CD4-positive, alpha-beta T cell (primary cell): ENCODE measurements at regions of chr6 and their contacts with region 1.

Region 1: DNA sequence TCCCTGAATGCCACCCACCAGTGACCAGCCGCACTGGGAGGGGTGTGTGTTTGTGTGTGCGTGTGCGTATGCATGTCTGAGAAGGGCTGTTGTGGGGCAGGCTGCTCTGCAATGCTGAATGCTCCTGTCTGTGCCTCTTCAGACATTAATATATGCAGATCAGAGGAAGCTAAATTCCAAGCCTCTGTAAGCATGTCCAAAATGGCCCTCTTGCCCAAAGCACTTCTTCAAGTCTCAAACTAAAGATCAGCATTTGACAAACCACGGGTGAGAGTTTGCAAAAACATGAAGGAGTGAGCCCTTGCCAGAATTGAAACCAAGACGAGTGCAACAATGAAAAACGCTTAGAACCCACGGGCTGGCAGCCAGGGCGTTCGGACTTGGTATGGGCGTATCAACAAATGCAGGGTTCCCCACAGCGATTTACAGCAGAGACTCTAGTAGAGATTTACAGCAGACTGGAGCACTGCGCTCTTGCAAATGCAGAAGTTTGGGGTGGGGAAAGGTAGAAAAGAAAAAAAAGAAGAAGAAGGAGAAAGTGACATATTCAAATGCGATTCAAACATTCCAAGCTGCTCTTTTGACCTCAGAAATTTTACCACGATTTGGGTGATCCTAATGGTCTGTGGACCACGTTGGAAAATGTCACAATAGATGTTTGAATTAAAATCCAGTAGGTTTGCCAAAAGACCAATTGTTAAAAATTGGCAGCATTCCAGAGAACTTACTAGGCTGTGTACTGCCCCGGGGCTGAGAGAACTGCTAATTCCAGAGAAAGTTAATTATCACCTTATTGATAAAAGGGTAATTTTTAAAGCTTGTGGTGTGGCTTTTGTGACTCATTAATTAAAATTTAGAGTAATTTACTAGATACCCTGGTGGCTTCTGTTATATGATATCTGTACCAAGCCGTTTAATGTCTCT is 3.5 kb downstream of the SCML4 start:
- DNase-seq: peak; percentile 39 to 69 (median 49)
- ATAC-seq: no peak
- H3K4me3 ChIP-seq: peak overlapping the region; percentile 74
- H3K4me3 Mint-ChIP-seq: peak overlapping the region; percentile 96
- H3K27ac ChIP-seq: peak overlapping the region; percentile 87 to 88
- H3K27ac Mint-ChIP-seq: peak overlapping the region; percentile 96
- H3K4me1 ChIP-seq: peaks cover 64% of the 10 kb centered on the region
- H3K4me1 Mint-ChIP-seq: peaks cover 87% of the 10 kb centered on the region
- H3K27me3 ChIP-seq: no peaks in the 10 kb centered on the region
- H3K27me3 Mint-ChIP-seq: no peaks in the 10 kb centered on the region
- CTCF ChIP-seq: no peak

Region 2: GRCh38 chr6:107634324-107635056 is 186.1 kb before region 1 on chr6:
- CTCF ChIA-PET with region 1: no interaction called
- POLR2A ChIA-PET with region 1: no interaction called
- intact Hi-C with region 1: no loop called
- DNase-seq: peak in 1 of 14 experiments; percentile 30
- ATAC-seq: no peak
- H3K4me3 ChIP-seq: no peak overlapping the region
- H3K4me3 Mint-ChIP-seq: peak overlapping the region; percentile 38
- H3K27ac ChIP-seq: no peak overlapping the region
- H3K27ac Mint-ChIP-seq: no peak overlapping the region
- H3K4me1 ChIP-seq: peaks cover 12% of the 10 kb centered on the region
- H3K4me1 Mint-ChIP-seq: no peaks in the 10 kb centered on the region
- H3K27me3 ChIP-seq: peaks cover 24 to 43% of the 10 kb centered on the region in 2 experiments
- H3K27me3 Mint-ChIP-seq: peaks cover 72% of the 10 kb centered on the region
- CTCF ChIP-seq: no peak

Region 3: DNA sequence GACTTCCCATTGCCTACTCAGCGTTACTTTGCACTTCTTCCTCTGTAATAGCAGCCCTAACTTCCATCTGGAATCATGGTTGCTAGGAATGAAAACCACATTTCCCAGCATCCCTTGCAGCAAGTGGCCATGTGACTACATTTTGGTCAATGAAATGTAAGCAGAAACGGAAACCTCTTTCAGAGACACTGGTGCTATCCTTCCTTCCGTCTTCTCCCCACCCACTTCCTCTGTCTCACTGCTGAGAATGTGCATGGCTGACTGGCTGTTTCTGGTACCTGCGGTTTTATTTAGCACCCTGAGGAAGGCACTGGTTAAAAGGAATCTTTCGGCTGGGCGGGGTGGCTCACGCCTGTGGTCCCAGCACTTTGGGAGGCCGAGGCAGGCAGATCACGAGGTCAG is 103.9 kb before region 1 on chr6:
- CTCF ChIA-PET with region 1: no interaction called
- POLR2A ChIA-PET with region 1: interaction called, 21 read pairs
- intact Hi-C with region 1: no loop called
- DNase-seq: peak; percentile 49 to 95 (median 66)
- ATAC-seq: peak; percentile 91
- H3K4me3 ChIP-seq: no peak overlapping the region
- H3K4me3 Mint-ChIP-seq: peak overlapping the region; percentile 75
- H3K27ac ChIP-seq: peak overlapping the region in 1 of 2 donors; percentile 63
- H3K27ac Mint-ChIP-seq: peak overlapping the region; percentile 91
- H3K4me1 ChIP-seq: peaks cover 76% of the 10 kb centered on the region
- H3K4me1 Mint-ChIP-seq: peaks cover 77% of the 10 kb centered on the region
- H3K27me3 ChIP-seq: no peaks in the 10 kb centered on the region
- H3K27me3 Mint-ChIP-seq: no peaks in the 10 kb centered on the region
- CTCF ChIP-seq: no peak

Region 4: GRCh38 chr6:107740496-107741190 is 80.0 kb before region 1 on chr6:
- CTCF ChIA-PET with region 1: interaction called, 5 read pairs
- POLR2A ChIA-PET with region 1: interaction called, 259 read pairs
- intact Hi-C with region 1: loop called in 1 of 2 experiments (anchors 1 kb)
- DNase-seq: peak in 4 of 14 experiments; percentile 49 to 56 (median 54)
- ATAC-seq: peak; percentile 14
- H3K4me3 ChIP-seq: peak overlapping the region; percentile 46
- H3K4me3 Mint-ChIP-seq: peak overlapping the region; percentile 76
- H3K27ac ChIP-seq: peak overlapping the region; percentile 69 to 86
- H3K27ac Mint-ChIP-seq: peak overlapping the region; percentile 93
- H3K4me1 ChIP-seq: peaks cover 59% of the 10 kb centered on the region
- H3K4me1 Mint-ChIP-seq: peaks cover 87% of the 10 kb centered on the region
- H3K27me3 ChIP-seq: no peaks in the 10 kb centered on the region
- H3K27me3 Mint-ChIP-seq: no peaks in the 10 kb centered on the region
- CTCF ChIP-seq: no peak

Region 5: DNA sequence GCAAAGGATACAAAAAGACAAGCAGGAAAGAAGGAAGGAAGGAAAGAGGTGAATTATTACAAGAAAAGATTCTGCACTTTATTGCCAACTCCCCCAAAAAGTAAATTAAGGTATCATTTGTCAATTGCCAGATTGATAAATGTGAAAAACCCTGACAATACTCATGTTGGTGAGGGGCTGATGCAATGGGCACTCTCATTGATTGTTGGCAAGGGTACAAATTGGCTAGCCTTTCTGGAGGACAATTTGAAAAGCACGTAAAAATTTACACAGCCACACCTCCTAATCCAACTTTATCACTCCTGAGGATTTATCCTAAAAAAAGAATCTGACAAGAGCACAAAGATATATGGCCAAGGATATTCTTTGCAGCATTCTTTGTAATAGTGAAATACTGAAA is 44.2 kb before region 1 on chr6:
- CTCF ChIA-PET with region 1: no interaction called
- POLR2A ChIA-PET with region 1: no interaction called
- intact Hi-C with region 1: no loop called
- DNase-seq: no peak
- ATAC-seq: no peak
- H3K4me3 ChIP-seq: no peak overlapping the region
- H3K4me3 Mint-ChIP-seq: no peak overlapping the region
- H3K27ac ChIP-seq: no peak overlapping the region
- H3K27ac Mint-ChIP-seq: peak overlapping the region; percentile 59
- H3K4me1 ChIP-seq: peaks cover 6% of the 10 kb centered on the region
- H3K4me1 Mint-ChIP-seq: peaks cover 85% of the 10 kb centered on the region
- H3K27me3 ChIP-seq: no peaks in the 10 kb centered on the region
- H3K27me3 Mint-ChIP-seq: no peaks in the 10 kb centered on the region
- CTCF ChIP-seq: no peak

Region 6: GRCh38 chr6:107786709-107787588 is 33.7 kb before region 1 on chr6:
- CTCF ChIA-PET with region 1: interaction called, 7 read pairs
- POLR2A ChIA-PET with region 1: interaction called, 220 read pairs
- intact Hi-C with region 1: loop called (anchors 2 to 5 kb)
- DNase-seq: peak in 13 of 14 experiments; percentile 30 to 75 (median 52)
- ATAC-seq: peak; percentile 79
- H3K4me3 ChIP-seq: peak overlapping the region; percentile 0
- H3K4me3 Mint-ChIP-seq: peak overlapping the region; percentile 87
- H3K27ac ChIP-seq: peak overlapping the region; percentile 19 to 66
- H3K27ac Mint-ChIP-seq: peak overlapping the region; percentile 93
- H3K4me1 ChIP-seq: peaks cover 81% of the 10 kb centered on the region
- H3K4me1 Mint-ChIP-seq: peaks cover 87% of the 10 kb centered on the region
- H3K27me3 ChIP-seq: no peaks in the 10 kb centered on the region
- H3K27me3 Mint-ChIP-seq: no peaks in the 10 kb centered on the region
- CTCF ChIP-seq: no peak

Region 7: GRCh38 chr6:107806691-107807090 is 13.9 kb before region 1 on chr6:
- CTCF ChIA-PET with region 1: interaction called, 4 read pairs
- POLR2A ChIA-PET with region 1: interaction called, 31 read pairs
- intact Hi-C with region 1: loop called in 1 of 2 experiments (anchors 2 kb)
- DNase-seq: peak in 1 of 14 experiments; percentile 3
- ATAC-seq: no peak
- H3K4me3 ChIP-seq: no peak overlapping the region
- H3K4me3 Mint-ChIP-seq: no peak overlapping the region
- H3K27ac ChIP-seq: no peak overlapping the region
- H3K27ac Mint-ChIP-seq: peak overlapping the region; percentile 80
- H3K4me1 ChIP-seq: peaks cover 41% of the 10 kb centered on the region
- H3K4me1 Mint-ChIP-seq: peaks cover 85% of the 10 kb centered on the region
- H3K27me3 ChIP-seq: no peaks in the 10 kb centered on the region
- H3K27me3 Mint-ChIP-seq: no peaks in the 10 kb centered on the region
- CTCF ChIP-seq: no peak

Region 8: GRCh38 chr6:107847844-107848802 is 27.5 kb after region 1 on chr6:
- CTCF ChIA-PET with region 1: interaction called, 47 read pairs
- POLR2A ChIA-PET with region 1: interaction called, 82 read pairs
- intact Hi-C with region 1: loop called in 1 of 2 experiments (anchors 1 kb)
- DNase-seq: peak; percentile 66 to 88 (median 76)
- ATAC-seq: peak; percentile 80
- H3K4me3 ChIP-seq: peak overlapping the region; percentile 61
- H3K4me3 Mint-ChIP-seq: peak overlapping the region; percentile 88
- H3K27ac ChIP-seq: no peak overlapping the region
- H3K27ac Mint-ChIP-seq: peak overlapping the region; percentile 83
- H3K4me1 ChIP-seq: peaks cover 22% of the 10 kb centered on the region
- H3K4me1 Mint-ChIP-seq: peaks cover 30% of the 10 kb centered on the region
- H3K27me3 ChIP-seq: no peaks in the 10 kb centered on the region
- H3K27me3 Mint-ChIP-seq: no peaks in the 10 kb centered on the region
- CTCF ChIP-seq: peak; percentile 96